Sciatic nerve (tissue), 2 donors: ENCODE measurements at regions of chr3 and their contacts with region 1.

Region 1: DNA sequence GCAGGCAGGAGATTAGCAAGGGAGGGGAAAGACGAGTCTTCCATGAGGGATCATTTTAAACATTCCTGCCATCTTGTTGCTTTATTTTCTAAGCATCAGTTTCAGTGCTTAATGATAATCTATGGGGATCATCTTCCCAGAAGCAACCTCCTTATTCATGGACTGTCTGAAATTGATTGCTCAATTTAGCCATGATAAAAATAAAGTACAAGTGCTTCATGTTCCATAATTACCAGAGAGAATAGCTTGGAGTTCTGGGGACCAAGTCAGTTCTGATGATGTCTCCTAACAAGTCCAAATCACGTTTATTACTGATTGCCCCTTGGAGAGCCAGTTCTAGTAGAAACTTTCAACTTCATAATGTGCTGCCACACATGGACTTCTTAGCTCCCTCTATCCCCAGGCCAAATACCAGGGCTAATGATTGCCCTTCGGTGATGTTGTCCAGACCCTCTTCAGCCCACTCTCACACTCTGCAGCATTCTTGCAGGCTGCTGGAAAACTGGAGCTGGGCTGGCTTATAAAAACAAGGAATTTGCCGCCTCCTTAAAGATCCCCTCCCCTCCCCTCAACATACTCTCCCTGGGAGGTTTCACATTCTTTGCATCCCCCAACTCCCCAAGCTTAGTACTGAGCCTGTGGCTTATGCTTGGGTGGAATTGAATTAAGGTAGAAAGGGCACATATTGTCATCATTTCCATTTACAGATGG is 222.1 kb upstream of the ADAMTS9 start:
- DNase-seq: no peak
- ATAC-seq: no peak

Region 2: GRCh38 chr3:64878362-64878761 is 31.6 kb before region 1 on chr3:
- intact Hi-C with region 1: loop called (anchors 1 kb)
- DNase-seq: no peak
- ATAC-seq: no peak

Region 3: GRCh38 chr3:64936556-64936955 is 26.6 kb after region 1 on chr3:
- intact Hi-C with region 1: no loop called
- DNase-seq: no peak
- ATAC-seq: peak; percentile 40